H1 (cell line): ENCODE measurements at regions of chr1 and their contacts with region 1.

Region 1: DNA sequence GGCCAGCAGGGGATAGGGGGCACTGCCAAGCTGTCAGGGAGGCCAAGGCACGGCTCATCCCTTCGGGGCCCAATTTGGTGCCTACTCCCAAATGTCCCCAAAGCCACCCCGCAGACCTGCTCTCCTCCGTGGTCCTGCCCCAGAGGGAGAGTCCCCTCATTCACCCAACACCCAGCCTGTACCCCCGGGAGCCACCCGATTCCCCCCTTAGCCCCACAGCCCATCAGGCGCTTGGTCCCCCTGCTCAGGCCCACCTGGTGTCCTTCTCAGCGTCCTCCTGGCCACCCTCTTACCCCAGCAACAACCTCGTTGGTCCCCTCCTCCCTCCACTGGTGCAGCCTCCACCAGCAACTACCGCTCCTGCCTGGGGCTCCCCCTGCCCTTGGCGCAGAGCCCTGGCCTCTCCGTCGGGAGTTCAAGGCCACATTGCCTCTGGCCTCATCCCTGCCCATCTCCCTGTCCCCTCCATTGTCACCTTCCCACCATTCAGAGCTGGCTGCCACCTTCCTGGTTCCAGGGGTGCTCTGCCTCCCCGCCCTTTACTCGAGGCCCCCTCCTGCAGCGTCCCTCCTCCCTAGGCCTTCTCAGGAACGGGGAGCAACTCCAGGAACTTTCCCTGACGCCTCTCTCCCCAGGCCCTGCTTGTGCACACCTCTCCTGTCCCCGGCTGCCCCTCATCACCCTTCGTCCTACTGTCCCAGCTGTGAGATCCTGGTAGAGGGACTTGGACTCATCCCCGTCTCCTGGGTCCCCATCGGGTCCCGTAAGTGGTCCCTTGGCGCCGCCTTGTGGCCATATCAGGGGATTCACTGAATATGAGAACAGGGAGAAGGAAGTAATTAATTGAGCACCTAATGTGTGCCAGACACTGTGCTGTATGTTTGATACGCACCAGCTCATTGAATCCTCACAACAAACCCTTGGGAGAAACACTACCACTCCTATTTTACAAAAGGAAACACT is 73.9 kb downstream of the RAP1GAP start:
- DNase-seq: peak in 1 of 2 experiments; percentile 93
- H3K4me3 ChIP-seq: no peak overlapping the region
- H3K27ac ChIP-seq: no peak overlapping the region
- H3K4me1 ChIP-seq: peaks cover 5 to 14% (median 10%) of the 10 kb centered on the region in 4 experiments; a peak in 6 of 7 replicates
- H3K27me3 ChIP-seq: 0 out of 7 replicates have a peak, but pooled peaks cover 0 to 2% (median 0%) of the 10 kb centered on the region in 4 experiments
- CTCF ChIP-seq: peak in 2 of 3 experiments; percentile 90 to 94; a peak in 3 of 4 replicates
- EP300 ChIP-seq: no peak
- POLR2A ChIP-seq: no peak
- RAD21 ChIP-seq: peak; percentile 94 to 97

Region 2: GRCh38 chr1:21472861-21473260 is 122.4 kb before region 1 on chr1:
- CTCF ChIA-PET with region 1: no interaction called
- POLR2A ChIA-PET with region 1: no interaction called
- DNase-seq: peak in 1 of 2 experiments; percentile 24
- H3K4me3 ChIP-seq: no peak overlapping the region
- H3K27ac ChIP-seq: no peak overlapping the region
- H3K4me1 ChIP-seq: peaks cover 0 to 5% (median 3%) of the 10 kb centered on the region in 4 experiments; a peak in 4 of 7 replicates
- H3K27me3 ChIP-seq: no peaks in the 10 kb centered on the region
- CTCF ChIP-seq: no peak
- EP300 ChIP-seq: no peak
- POLR2A ChIP-seq: no peak
- RAD21 ChIP-seq: no peak

Region 3: GRCh38 chr1:21559788-21560567 is 35.2 kb before region 1 on chr1:
- CTCF ChIA-PET with region 1: interaction called, 17 read pairs
- POLR2A ChIA-PET with region 1: interaction called, 4 read pairs
- DNase-seq: no peak
- H3K4me3 ChIP-seq: no peak overlapping the region
- H3K27ac ChIP-seq: no peak overlapping the region
- H3K4me1 ChIP-seq: no peaks in the 10 kb centered on the region; a peak in 1 of 7 replicates
- H3K27me3 ChIP-seq: no peaks in the 10 kb centered on the region
- CTCF ChIP-seq: no peak
- EP300 ChIP-seq: no peak
- POLR2A ChIP-seq: no peak
- RAD21 ChIP-seq: no peak

Region 4: GRCh38 chr1:21573971-21574465 is 21.2 kb before region 1 on chr1:
- CTCF ChIA-PET with region 1: interaction called, 10 read pairs
- POLR2A ChIA-PET with region 1: interaction called, 3 read pairs
- DNase-seq: peak; percentile 57 to 82
- H3K4me3 ChIP-seq: no peak overlapping the region
- H3K27ac ChIP-seq: no peak overlapping the region
- H3K4me1 ChIP-seq: peaks cover 2 to 7% (median 4%) of the 10 kb centered on the region in 4 experiments; a peak in 6 of 7 replicates
- H3K27me3 ChIP-seq: no peaks in the 10 kb centered on the region; a peak in 2 of 7 replicates
- CTCF ChIP-seq: peak; percentile 70 to 87 (median 79)
- EP300 ChIP-seq: no peak
- POLR2A ChIP-seq: no peak
- RAD21 ChIP-seq: peak; percentile 92 to 95

Region 5: GRCh38 chr1:21607549-21608529 is 12.6 kb after region 1 on chr1:
- CTCF ChIA-PET with region 1: interaction called, 15 read pairs
- POLR2A ChIA-PET with region 1: interaction called, 3 read pairs
- DNase-seq: peak; percentile 100
- H3K4me3 ChIP-seq: peak overlapping the region in 1 of 4 experiments; percentile 40; a peak in 2 of 8 replicates
- H3K27ac ChIP-seq: no peak overlapping the region
- H3K4me1 ChIP-seq: peaks cover 2 to 7% (median 3%) of the 10 kb centered on the region in 4 experiments; a peak in 6 of 7 replicates
- H3K27me3 ChIP-seq: no peaks in the 10 kb centered on the region
- CTCF ChIP-seq: no peak
- EP300 ChIP-seq: no peak
- POLR2A ChIP-seq: no peak
- RAD21 ChIP-seq: no peak

Region 6: DNA sequence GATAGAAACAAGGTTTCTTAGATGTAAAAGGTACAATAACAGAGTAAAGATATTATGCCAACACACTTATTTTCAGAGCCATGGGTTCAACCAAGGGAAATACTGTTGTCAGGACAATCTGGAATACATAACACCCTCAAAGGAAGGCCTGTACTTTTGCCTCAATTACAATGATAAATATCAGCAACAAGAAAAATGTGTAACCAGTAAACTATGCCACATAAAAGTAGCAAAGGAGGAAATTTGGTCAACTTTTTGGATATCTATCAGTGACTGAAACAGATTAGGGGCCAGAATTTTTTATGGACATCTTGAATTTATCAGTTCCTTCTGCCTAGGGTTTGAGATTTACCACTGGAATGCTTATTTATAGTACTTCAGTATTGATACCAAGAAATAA is 98.5 kb after region 1 on chr1:
- CTCF ChIA-PET with region 1: no interaction called
- POLR2A ChIA-PET with region 1: no interaction called
- DNase-seq: no peak
- H3K4me3 ChIP-seq: no peak overlapping the region
- H3K27ac ChIP-seq: no peak overlapping the region
- H3K4me1 ChIP-seq: no peaks in the 10 kb centered on the region
- H3K27me3 ChIP-seq: no peaks in the 10 kb centered on the region
- CTCF ChIP-seq: no peak
- EP300 ChIP-seq: no peak
- POLR2A ChIP-seq: no peak
- RAD21 ChIP-seq: no peak

Region 7: DNA sequence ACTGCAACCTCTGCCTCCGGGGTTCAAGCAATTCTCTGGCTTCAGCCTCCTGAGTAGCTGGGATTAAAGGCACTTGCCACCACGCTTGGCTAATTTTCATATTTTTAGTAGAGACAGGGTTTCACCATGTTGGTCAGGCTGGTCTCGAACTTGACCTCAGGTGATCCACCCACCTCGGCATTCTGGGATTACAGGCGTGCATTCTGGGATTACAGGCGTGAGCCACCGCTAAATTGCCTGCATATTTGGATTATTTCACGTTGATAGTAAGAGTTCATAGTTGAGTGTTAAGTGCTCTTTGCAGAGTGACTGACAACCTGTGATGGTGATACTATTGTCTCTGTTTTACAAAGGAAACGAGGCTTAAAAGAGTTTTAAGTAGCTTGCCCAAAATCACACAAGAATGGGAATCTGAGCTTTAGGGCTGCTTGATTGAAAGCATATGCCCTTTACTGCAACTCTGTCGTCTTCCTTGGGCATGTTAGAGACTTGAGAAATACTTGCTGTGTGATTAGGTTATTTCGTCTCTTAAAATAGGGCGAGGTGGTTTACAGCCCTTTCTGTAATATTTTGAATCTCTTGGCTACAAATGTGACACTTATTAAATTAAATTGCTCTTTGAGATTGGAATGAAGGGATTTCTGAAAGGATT is 469.7 kb after region 1 on chr1:
- CTCF ChIA-PET with region 1: no interaction called
- POLR2A ChIA-PET with region 1: no interaction called
- DNase-seq: no peak
- H3K4me3 ChIP-seq: no peak overlapping the region
- H3K27ac ChIP-seq: no peak overlapping the region
- H3K4me1 ChIP-seq: peaks cover 0 to 12% (median 1%) of the 10 kb centered on the region in 4 experiments; a peak in 6 of 7 replicates
- H3K27me3 ChIP-seq: no peaks in the 10 kb centered on the region
- CTCF ChIP-seq: no peak
- EP300 ChIP-seq: no peak
- POLR2A ChIP-seq: no peak
- RAD21 ChIP-seq: no peak